Activated T-helper 1 cell treated with anti-CD3 and anti-CD28 coated beads, Interleukin-12 subunit alpha, Interleukin-12 subunit beta, Interleukin-2, Interleukin-4 antibody, amounts not matched to agents 30 ng/mL and 10 ng/mL and 1 ng/mL, durations not matched to agents 14 hours and 24 hours and 36 hours (primary cell): ENCODE measurements at regions of chr5 and their contacts with region 1.

Region 1: GRCh38 chr5:159240301-159240870 is 22.7 kb upstream of the UBLCP1 start:
- DNase-seq: no peak
- H3K4me3 Mint-ChIP-seq: peak overlapping the region; percentile 11
- H3K27ac Mint-ChIP-seq: peak overlapping the region; percentile 61
- H3K4me1 Mint-ChIP-seq: peaks cover 41% of the 10 kb centered on the region
- H3K27me3 Mint-ChIP-seq: peaks cover 5% of the 10 kb centered on the region

Region 2: DNA sequence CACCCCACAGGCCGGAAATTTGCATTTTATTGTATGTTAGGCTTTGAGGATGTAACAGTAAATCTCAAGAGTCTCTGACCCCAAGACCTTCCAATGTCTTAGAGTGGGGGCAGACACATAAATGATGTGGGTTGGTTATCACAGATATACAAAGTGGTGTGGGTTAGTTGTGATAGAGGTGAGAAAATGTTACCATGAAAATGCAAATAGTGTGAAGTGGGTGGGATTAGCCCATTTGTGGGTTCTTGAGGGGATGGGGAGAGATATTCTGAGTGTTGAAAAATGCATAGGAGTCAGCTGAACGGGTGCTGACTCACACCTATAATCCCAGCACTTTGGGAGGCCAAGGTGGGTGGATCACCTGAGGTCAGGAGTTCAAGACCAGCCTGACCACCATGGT is 23.1 kb before region 1 on chr5:
- intact Hi-C with region 1: loop called (anchors 1 kb)
- DNase-seq: no peak
- H3K4me3 Mint-ChIP-seq: no peak overlapping the region
- H3K27ac Mint-ChIP-seq: peak overlapping the region; percentile 76
- H3K4me1 Mint-ChIP-seq: peaks cover 17% of the 10 kb centered on the region
- H3K27me3 Mint-ChIP-seq: peaks cover 8% of the 10 kb centered on the region